CD4-positive, alpha-beta memory T cell (primary cell): ENCODE measurements at regions of chr16 and their contacts with region 1.

Region 1: GRCh38 chr16:85491058-85491771 is 121.9 kb upstream of the GSE1 start:
- DNase-seq: peak in 4 of 5 donors; percentile 11 to 33 (median 24)
- H3K4me3 ChIP-seq: no peak overlapping the region
- H3K4me3 Mint-ChIP-seq: no peak overlapping the region
- H3K27ac ChIP-seq: no peak overlapping the region
- H3K27ac Mint-ChIP-seq: no peak overlapping the region
- H3K4me1 ChIP-seq: no peaks in the 10 kb centered on the region
- H3K4me1 Mint-ChIP-seq: no peaks in the 10 kb centered on the region
- H3K27me3 ChIP-seq: no peaks in the 10 kb centered on the region
- H3K27me3 Mint-ChIP-seq: no peaks in the 10 kb centered on the region

Region 2: DNA sequence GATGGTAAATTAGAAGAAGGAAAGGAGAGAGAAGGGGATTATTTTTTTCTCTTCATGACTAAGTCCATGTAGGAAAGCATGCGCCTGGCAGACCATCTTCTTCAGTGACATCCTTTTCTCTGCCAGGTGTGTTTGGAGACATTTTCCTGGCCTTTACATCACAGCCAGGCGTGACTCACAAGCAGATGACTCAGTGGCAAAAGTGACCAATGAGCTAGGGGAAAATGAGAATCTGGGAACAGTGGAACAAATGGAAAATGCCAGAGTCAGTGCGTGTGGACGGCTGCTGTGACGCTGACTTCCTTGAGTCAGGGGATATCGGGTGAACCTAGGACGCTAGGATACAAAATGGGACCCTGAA is 454.2 kb before region 1 on chr16:
- CTCF ChIA-PET with region 1: no interaction called
- POLR2A ChIA-PET with region 1: no interaction called
- intact Hi-C with region 1: no loop called
- DNase-seq: no peak
- H3K4me3 ChIP-seq: no peak overlapping the region
- H3K4me3 Mint-ChIP-seq: no peak overlapping the region
- H3K27ac ChIP-seq: no peak overlapping the region
- H3K27ac Mint-ChIP-seq: peak overlapping the region in 1 of 7 donors; percentile 70
- H3K4me1 ChIP-seq: no peaks in the 10 kb centered on the region
- H3K4me1 Mint-ChIP-seq: peaks cover 0 to 4% (median 1%) of the 10 kb centered on the region in 4 donors
- H3K27me3 ChIP-seq: no peaks in the 10 kb centered on the region
- H3K27me3 Mint-ChIP-seq: no peaks in the 10 kb centered on the region

Region 3: GRCh38 chr16:85514595-85515318 is 23.5 kb after region 1 on chr16:
- CTCF ChIA-PET with region 1: no interaction called
- POLR2A ChIA-PET with region 1: no interaction called
- intact Hi-C with region 1: no loop called
- DNase-seq: no peak
- H3K4me3 ChIP-seq: no peak overlapping the region
- H3K4me3 Mint-ChIP-seq: no peak overlapping the region
- H3K27ac ChIP-seq: no peak overlapping the region
- H3K27ac Mint-ChIP-seq: no peak overlapping the region
- H3K4me1 ChIP-seq: no peaks in the 10 kb centered on the region
- H3K4me1 Mint-ChIP-seq: peaks cover 0 to 3% (median 1%) of the 10 kb centered on the region in 4 donors
- H3K27me3 ChIP-seq: no peaks in the 10 kb centered on the region
- H3K27me3 Mint-ChIP-seq: peaks cover 0 to 1% of the 10 kb centered on the region in 2 donors

Region 4: GRCh38 chr16:85569615-85570212 is 78.5 kb after region 1 on chr16:
- CTCF ChIA-PET with region 1: interaction called, 12 read pairs
- POLR2A ChIA-PET with region 1: no interaction called
- intact Hi-C with region 1: no loop called
- DNase-seq: peak in 3 of 5 donors; percentile 21 to 52 (median 30)
- H3K4me3 ChIP-seq: peak overlapping the region in 1 of 2 donors; percentile 17
- H3K4me3 Mint-ChIP-seq: peak overlapping the region; percentile 33 to 82 (median 72)
- H3K27ac ChIP-seq: peak overlapping the region; percentile 16
- H3K27ac Mint-ChIP-seq: peak overlapping the region; percentile 79 to 92 (median 88)
- H3K4me1 ChIP-seq: peaks cover 47% of the 10 kb centered on the region
- H3K4me1 Mint-ChIP-seq: peaks cover 34 to 73% (median 54%) of the 10 kb centered on the region in 4 donors
- H3K27me3 ChIP-seq: no peaks in the 10 kb centered on the region
- H3K27me3 Mint-ChIP-seq: no peaks in the 10 kb centered on the region